Left ventricle myocardium inferior (tissue), 1 donor: ENCODE measurements at regions of chr1 and their contacts with region 1.

Region 1: GRCh38 chr1:68120136-68120791 is 69.8 kb upstream of the DIRAS3 start:
- DNase-seq: no peak
- H3K4me3 ChIP-seq: no peak overlapping the region
- H3K27ac ChIP-seq: peak overlapping the region; percentile 6
- H3K4me1 ChIP-seq: peaks cover 22% of the 10 kb centered on the region
- H3K27me3 ChIP-seq: no peaks in the 10 kb centered on the region
- CTCF ChIP-seq: peak; percentile 89

Region 2: GRCh38 chr1:67760030-67760821 is 360.0 kb before region 1 on chr1:
- intact Hi-C with region 1: loop called (anchors 10 kb)
- DNase-seq: peak; percentile 31
- H3K4me3 ChIP-seq: no peak overlapping the region
- H3K27ac ChIP-seq: peak overlapping the region; percentile 46
- H3K4me1 ChIP-seq: peaks cover 40% of the 10 kb centered on the region
- H3K27me3 ChIP-seq: no peaks in the 10 kb centered on the region
- CTCF ChIP-seq: peak; percentile 91

Region 3: GRCh38 chr1:67957066-67957465 is 163.2 kb before region 1 on chr1:
- intact Hi-C with region 1: no loop called
- DNase-seq: no peak
- H3K4me3 ChIP-seq: no peak overlapping the region
- H3K27ac ChIP-seq: no peak overlapping the region
- H3K4me1 ChIP-seq: peaks cover 32% of the 10 kb centered on the region
- H3K27me3 ChIP-seq: no peaks in the 10 kb centered on the region
- CTCF ChIP-seq: no peak

Region 4: DNA sequence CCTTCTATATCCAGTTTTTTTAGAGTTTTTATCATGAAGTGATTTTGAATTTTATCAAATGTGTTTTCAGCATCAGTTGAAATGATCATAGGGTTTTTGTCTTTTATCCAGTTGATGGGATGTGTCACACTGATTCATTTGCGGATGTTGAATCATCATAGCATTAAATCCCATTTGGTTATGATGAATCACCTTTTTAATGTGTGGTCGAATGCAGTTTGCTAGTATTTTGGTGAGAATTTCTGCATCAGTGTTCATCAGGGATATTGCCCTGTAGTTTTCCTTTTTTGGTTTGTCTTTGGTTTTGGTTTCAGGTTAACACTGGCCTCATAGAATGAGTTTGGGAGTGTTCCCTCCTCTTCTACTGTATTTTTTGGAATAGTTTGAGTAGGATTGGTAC is 150.2 kb before region 1 on chr1:
- intact Hi-C with region 1: no loop called
- DNase-seq: no peak
- H3K4me3 ChIP-seq: no peak overlapping the region
- H3K27ac ChIP-seq: no peak overlapping the region
- H3K4me1 ChIP-seq: no peaks in the 10 kb centered on the region
- H3K27me3 ChIP-seq: no peaks in the 10 kb centered on the region
- CTCF ChIP-seq: no peak

Region 5: GRCh38 chr1:68221621-68222373 is 101.5 kb after region 1 on chr1:
- intact Hi-C with region 1: loop called (anchors 10 kb)
- DNase-seq: no peak
- H3K4me3 ChIP-seq: no peak overlapping the region
- H3K27ac ChIP-seq: peak overlapping the region; percentile 48
- H3K4me1 ChIP-seq: peaks cover 73% of the 10 kb centered on the region
- H3K27me3 ChIP-seq: no peaks in the 10 kb centered on the region
- CTCF ChIP-seq: no peak

Region 6: DNA sequence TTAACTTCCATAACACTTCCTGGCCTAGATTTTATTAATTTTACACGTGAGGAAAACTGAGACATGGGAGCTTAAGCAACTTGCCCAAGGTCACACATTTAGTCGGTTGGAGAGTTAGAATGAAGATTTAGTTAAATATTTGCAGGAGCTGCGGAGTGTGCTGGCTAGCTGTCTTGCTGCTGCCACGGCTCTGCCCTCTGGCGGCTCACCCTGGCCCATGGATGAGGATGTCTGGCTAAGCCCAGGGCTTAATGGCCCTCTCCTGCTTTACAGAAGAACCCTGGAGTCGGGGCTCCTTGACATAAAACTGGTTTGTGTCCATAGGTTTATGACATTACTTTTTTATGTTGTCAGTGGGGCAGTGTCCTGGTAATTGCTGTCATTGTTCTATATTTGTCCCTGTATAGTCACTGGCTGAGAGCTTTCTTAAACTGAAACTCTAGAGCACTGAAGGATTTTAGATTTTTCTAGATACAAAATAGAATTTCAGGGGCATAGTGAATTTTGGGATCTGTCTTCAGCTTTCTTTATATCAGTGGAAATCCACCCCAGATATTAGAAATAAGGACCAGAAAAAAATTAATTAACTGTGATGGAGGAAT is 200.9 kb after region 1 on chr1:
- intact Hi-C with region 1: loop called (anchors 10 kb)
- DNase-seq: peak; percentile 67
- H3K4me3 ChIP-seq: no peak overlapping the region
- H3K27ac ChIP-seq: no peak overlapping the region
- H3K4me1 ChIP-seq: no peaks in the 10 kb centered on the region
- H3K27me3 ChIP-seq: no peaks in the 10 kb centered on the region
- CTCF ChIP-seq: peak; percentile 84

Region 7: GRCh38 chr1:68344208-68344607 is 223.9 kb after region 1 on chr1:
- intact Hi-C with region 1: loop called (anchors 5 kb)
- DNase-seq: no peak
- H3K4me3 ChIP-seq: no peak overlapping the region
- H3K27ac ChIP-seq: no peak overlapping the region
- H3K4me1 ChIP-seq: peaks cover 4% of the 10 kb centered on the region
- H3K27me3 ChIP-seq: peaks cover 6% of the 10 kb centered on the region
- CTCF ChIP-seq: no peak

Region 8: DNA sequence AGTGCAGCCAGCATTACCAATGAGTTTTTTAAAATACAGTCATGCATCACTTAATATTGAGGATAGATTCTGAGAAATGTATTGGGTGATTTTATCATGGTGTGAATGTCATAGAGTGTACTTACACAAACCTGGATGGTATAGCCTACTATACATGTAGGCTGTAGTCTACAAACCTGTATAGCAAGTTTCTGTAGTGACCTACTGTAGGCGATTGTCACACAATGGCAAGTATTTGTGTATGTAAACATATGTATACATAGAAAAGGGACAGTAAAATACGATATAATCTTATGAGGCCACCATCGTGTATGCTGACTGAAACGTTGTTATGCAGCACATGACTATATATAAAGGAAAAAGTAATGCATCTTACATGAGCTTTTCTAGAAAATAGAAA is 281.2 kb after region 1 on chr1:
- intact Hi-C with region 1: no loop called
- DNase-seq: no peak
- H3K4me3 ChIP-seq: no peak overlapping the region
- H3K27ac ChIP-seq: no peak overlapping the region
- H3K4me1 ChIP-seq: no peaks in the 10 kb centered on the region
- H3K27me3 ChIP-seq: no peaks in the 10 kb centered on the region
- CTCF ChIP-seq: no peak